ENCODE measurements at regions of chr7 and their contacts with region 1.

Region 1: GRCh38 chr7:139095194-139095659 is 14.3 kb downstream of the ZC3HAV1 start:
- DNase-seq: peak; percentile 90
- H3K4me3 ChIP-seq: peak overlapping the region; percentile 61
- H3K27ac ChIP-seq: peak overlapping the region; percentile 93
- H3K4me1 ChIP-seq: peaks cover 45% of the 10 kb centered on the region
- CTCF ChIP-seq: peak; percentile 65

Region 2: DNA sequence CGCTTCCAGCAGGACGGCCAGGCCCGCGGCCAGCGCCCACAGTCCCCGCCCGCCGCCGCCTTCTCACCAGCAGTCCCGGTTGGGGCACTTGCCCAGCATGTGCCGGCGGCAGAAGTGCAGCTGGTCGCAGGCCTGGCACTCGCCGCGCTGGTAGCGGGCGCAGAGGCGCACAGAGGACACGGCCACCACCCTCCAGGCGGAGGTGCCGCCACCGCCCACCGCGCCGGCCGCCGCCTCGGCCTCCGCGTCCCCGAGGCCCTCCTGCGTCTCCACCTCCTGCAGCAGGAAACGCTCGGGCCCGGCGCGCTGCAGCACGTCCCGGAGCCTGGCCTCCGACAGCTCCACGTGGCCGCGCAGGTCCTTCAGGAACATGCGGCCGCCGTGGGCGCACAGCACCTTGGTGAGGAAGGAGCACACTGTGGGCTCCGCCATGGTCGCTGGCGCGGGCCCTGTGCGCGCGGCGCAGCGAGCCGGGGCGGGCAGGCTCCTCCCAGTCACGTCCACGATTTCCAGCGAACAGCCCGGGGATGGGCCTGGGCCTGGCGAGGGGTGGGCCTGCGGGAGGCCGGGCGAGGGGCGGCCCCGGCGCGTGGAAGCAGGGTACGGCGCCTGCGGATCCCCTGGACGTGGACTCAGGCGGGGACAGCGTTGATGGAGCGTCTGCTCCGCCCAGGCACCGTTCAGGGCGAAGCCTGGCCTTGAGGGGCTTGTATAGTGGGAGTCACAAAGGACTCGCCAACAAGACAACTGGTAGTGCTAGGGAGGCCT is 59.5 kb before region 1 on chr7 and contains the start of gene ZC3HAV1L:
- CTCF ChIA-PET with region 1: no interaction called
- POLR2A ChIA-PET with region 1: no interaction called
- intact Hi-C with region 1: no loop called
- DNase-seq: no peak
- H3K4me3 ChIP-seq: no peak within 1 kb of the TSS
- H3K27ac ChIP-seq: no peak within 1 kb of the TSS
- H3K4me1 ChIP-seq: no peaks in the 10 kb centered on the region
- CTCF ChIP-seq: no peak
- total RNA-seq, gene ZC3HAV1L: not detected in 2 replicates

Region 3: GRCh38 chr7:139080905-139081304 is 14.3 kb before region 1 on chr7:
- CTCF ChIA-PET with region 1: interaction called, 5 read pairs
- POLR2A ChIA-PET with region 1: interaction called, 10 read pairs
- intact Hi-C with region 1: no loop called
- DNase-seq: no peak
- H3K4me3 ChIP-seq: no peak overlapping the region
- H3K27ac ChIP-seq: no peak overlapping the region
- H3K4me1 ChIP-seq: no peaks in the 10 kb centered on the region
- CTCF ChIP-seq: no peak

Region 4: GRCh38 chr7:140914083-140914482 is 1818.9 kb after region 1 on chr7:
- CTCF ChIA-PET with region 1: no interaction called
- POLR2A ChIA-PET with region 1: no interaction called
- intact Hi-C with region 1: loop called (anchors 10 kb)
- DNase-seq: no peak
- H3K4me3 ChIP-seq: no peak overlapping the region
- H3K27ac ChIP-seq: no peak overlapping the region
- H3K4me1 ChIP-seq: peaks cover 7% of the 10 kb centered on the region
- CTCF ChIP-seq: no peak

Measured in OCI-LY7 (cell line).